CD8-positive, alpha-beta T cell (primary cell): ENCODE measurements at regions of chr16 and their contacts with region 1.

Region 1: GRCh38 chr16:69930117-69930776 is 20.9 kb upstream of the CLEC18A start:
- DNase-seq: peak in 7 of 9 experiments; percentile 29 to 69 (median 52)
- ATAC-seq: peak; percentile 71
- H3K4me3 ChIP-seq: no peak overlapping the region
- H3K4me3 Mint-ChIP-seq: no peak overlapping the region
- H3K27ac ChIP-seq: no peak overlapping the region
- H3K27ac Mint-ChIP-seq: no peak overlapping the region
- H3K4me1 ChIP-seq: no peaks in the 10 kb centered on the region
- H3K4me1 Mint-ChIP-seq: no peaks in the 10 kb centered on the region
- H3K27me3 ChIP-seq: no peaks in the 10 kb centered on the region
- H3K27me3 Mint-ChIP-seq: no peaks in the 10 kb centered on the region
- CTCF ChIP-seq: peak; percentile 70

Region 2: GRCh38 chr16:69396187-69397061 is 533.8 kb before region 1 on chr16:
- CTCF ChIA-PET with region 1: no interaction called
- POLR2A ChIA-PET with region 1: no interaction called
- intact Hi-C with region 1: no loop called
- DNase-seq: peak; percentile 27 to 87 (median 74)
- ATAC-seq: peak; percentile 85
- H3K4me3 ChIP-seq: no peak overlapping the region
- H3K4me3 Mint-ChIP-seq: no peak overlapping the region
- H3K27ac ChIP-seq: peak overlapping the region in 1 of 2 experiments; percentile 58
- H3K27ac Mint-ChIP-seq: peak overlapping the region; percentile 0
- H3K4me1 ChIP-seq: peaks cover 4% of the 10 kb centered on the region
- H3K4me1 Mint-ChIP-seq: peaks cover 6% of the 10 kb centered on the region
- H3K27me3 ChIP-seq: no peaks in the 10 kb centered on the region
- H3K27me3 Mint-ChIP-seq: no peaks in the 10 kb centered on the region
- CTCF ChIP-seq: peak; percentile 80

Region 3: DNA sequence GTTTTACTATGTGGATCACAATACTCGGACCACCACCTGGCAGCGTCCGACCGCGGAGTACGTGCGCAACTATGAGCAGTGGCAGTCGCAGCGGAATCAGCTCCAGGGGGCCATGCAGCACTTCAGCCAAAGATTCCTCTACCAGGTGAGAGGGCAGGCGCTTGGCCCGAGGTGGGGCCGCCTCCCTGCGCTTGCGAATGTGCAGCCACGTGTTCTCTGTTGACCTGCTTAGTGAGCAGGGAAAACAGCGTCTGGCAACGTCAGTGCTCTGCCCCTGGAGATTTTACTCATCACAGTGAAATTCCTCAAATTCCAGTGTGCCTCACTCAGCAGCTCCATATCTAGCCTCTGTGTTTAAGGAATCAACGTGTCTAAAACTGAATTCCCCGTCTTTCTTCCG is 12.5 kb before region 1 on chr16:
- CTCF ChIA-PET with region 1: interaction called, 30 read pairs
- POLR2A ChIA-PET with region 1: no interaction called
- intact Hi-C with region 1: no loop called
- DNase-seq: no peak
- ATAC-seq: no peak
- H3K4me3 ChIP-seq: no peak overlapping the region
- H3K4me3 Mint-ChIP-seq: no peak overlapping the region
- H3K27ac ChIP-seq: no peak overlapping the region
- H3K27ac Mint-ChIP-seq: no peak overlapping the region
- H3K4me1 ChIP-seq: no peaks in the 10 kb centered on the region
- H3K4me1 Mint-ChIP-seq: no peaks in the 10 kb centered on the region
- H3K27me3 ChIP-seq: no peaks in the 10 kb centered on the region
- H3K27me3 Mint-ChIP-seq: no peaks in the 10 kb centered on the region
- CTCF ChIP-seq: no peak

Region 4: GRCh38 chr16:69941251-69942098 is 11.2 kb after region 1 on chr16:
- CTCF ChIA-PET with region 1: interaction called, 17 read pairs
- POLR2A ChIA-PET with region 1: no interaction called
- intact Hi-C with region 1: no loop called
- DNase-seq: no peak
- ATAC-seq: no peak
- H3K4me3 ChIP-seq: no peak overlapping the region
- H3K4me3 Mint-ChIP-seq: no peak overlapping the region
- H3K27ac ChIP-seq: no peak overlapping the region
- H3K27ac Mint-ChIP-seq: no peak overlapping the region
- H3K4me1 ChIP-seq: no peaks in the 10 kb centered on the region
- H3K4me1 Mint-ChIP-seq: no peaks in the 10 kb centered on the region
- H3K27me3 ChIP-seq: no peaks in the 10 kb centered on the region
- H3K27me3 Mint-ChIP-seq: no peaks in the 10 kb centered on the region
- CTCF ChIP-seq: no peak

Region 5: DNA sequence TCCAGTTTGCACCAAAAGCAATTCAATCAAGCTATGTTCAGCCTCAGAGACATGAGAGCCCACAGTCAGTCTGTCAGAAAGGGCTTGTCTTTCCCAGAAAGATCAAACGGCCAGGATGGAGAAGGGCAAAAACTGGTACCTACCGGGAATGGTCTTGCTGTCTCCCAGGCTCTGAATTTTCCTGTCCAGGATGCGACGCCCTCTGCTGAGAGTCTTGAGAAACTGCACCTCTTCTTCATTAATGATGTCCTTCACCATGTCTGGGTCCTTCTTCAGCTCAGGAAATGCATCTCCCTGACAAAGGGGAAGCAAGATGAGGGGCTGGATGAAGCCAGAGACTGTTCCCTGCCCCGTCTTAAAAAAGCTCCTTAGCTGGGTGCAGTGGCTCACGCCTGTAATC is 337.3 kb after region 1 on chr16:
- CTCF ChIA-PET with region 1: no interaction called
- POLR2A ChIA-PET with region 1: no interaction called
- intact Hi-C with region 1: no loop called
- DNase-seq: peak in 3 of 9 experiments; percentile 27 to 60 (median 51)
- ATAC-seq: no peak
- H3K4me3 ChIP-seq: no peak overlapping the region
- H3K4me3 Mint-ChIP-seq: no peak overlapping the region
- H3K27ac ChIP-seq: no peak overlapping the region
- H3K27ac Mint-ChIP-seq: no peak overlapping the region
- H3K4me1 ChIP-seq: no peaks in the 10 kb centered on the region
- H3K4me1 Mint-ChIP-seq: no peaks in the 10 kb centered on the region
- H3K27me3 ChIP-seq: no peaks in the 10 kb centered on the region
- H3K27me3 Mint-ChIP-seq: no peaks in the 10 kb centered on the region
- CTCF ChIP-seq: peak; percentile 42